ENCODE measurements at regions of chr5 and their contacts with region 1.

Region 1: GRCh38 chr5:96336351-96336985 is 96.6 kb downstream of the PCSK1 start:
- DNase-seq: peak; percentile 80
- H3K4me3 ChIP-seq: no peak overlapping the region
- H3K27ac ChIP-seq: no peak overlapping the region
- H3K27me3 ChIP-seq: no peaks in the 10 kb centered on the region
- CTCF ChIP-seq: peak; percentile 97

Region 2: DNA sequence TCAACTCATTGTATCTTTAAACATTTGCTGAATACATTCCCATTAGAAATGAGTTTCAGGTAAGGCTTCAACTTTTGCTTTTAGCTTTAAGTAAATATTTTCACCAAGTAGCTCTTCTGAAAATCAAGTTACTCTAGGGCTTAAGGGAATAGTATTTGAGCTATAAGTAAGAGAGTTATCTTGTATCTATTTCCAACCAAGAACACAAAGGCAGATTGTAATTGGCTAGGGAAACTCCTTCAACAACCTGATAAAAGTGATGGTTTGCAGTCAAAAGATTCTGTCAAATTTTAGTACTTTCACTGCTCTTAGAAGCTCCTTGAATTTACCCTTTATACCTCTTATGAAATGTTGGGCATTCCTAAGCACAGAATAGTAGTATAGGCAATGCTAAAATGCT is 387.8 kb before region 1 on chr5:
- CTCF ChIA-PET with region 1: interaction called, 11 read pairs
- POLR2A ChIA-PET with region 1: no interaction called
- DNase-seq: no peak
- H3K4me3 ChIP-seq: no peak overlapping the region
- H3K27ac ChIP-seq: no peak overlapping the region
- H3K27me3 ChIP-seq: no peaks in the 10 kb centered on the region
- CTCF ChIP-seq: no peak

Region 3: DNA sequence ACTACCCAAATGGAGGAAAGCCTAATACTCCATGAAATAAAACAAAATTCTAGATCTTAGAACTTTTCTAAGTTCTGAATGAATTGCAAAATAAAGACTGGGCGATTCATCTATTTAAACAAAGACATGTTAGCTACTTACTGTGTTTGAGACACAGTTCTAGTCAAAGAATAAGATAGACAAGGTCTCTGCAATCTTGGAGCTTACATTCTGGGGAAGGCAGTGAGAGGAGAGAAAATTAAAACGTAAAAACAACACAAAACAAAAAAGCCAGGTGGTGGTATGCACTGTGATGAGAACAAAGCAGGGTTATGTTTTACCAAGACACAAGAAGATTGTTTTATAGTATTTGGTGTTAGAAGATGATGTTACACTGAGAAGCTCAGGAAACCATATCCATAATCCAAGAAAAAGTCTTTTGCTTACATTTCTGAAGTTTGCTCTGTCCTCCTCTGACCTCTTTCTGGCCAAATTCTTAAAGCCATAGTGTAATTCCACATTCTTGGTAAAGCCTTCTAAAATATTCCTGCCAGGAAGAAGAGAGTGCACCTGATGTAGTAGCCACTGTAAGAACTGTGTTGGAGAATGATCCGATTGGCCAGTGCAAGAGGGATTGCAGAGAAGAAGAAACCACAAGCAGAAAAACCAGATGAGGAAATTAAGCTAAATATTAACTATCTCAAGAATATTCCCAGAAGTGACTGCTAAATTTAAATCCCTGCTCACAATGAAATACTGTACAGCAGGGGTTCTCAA is 121.8 kb before region 1 on chr5:
- CTCF ChIA-PET with region 1: interaction called, 12 read pairs
- POLR2A ChIA-PET with region 1: no interaction called
- DNase-seq: no peak
- H3K4me3 ChIP-seq: no peak overlapping the region
- H3K27ac ChIP-seq: no peak overlapping the region
- H3K27me3 ChIP-seq: no peaks in the 10 kb centered on the region
- CTCF ChIP-seq: no peak

Region 4: GRCh38 chr5:96259151-96259772 is 77.2 kb before region 1 on chr5:
- CTCF ChIA-PET with region 1: interaction called, 14 read pairs
- POLR2A ChIA-PET with region 1: no interaction called
- DNase-seq: no peak
- H3K4me3 ChIP-seq: no peak overlapping the region
- H3K27ac ChIP-seq: peak overlapping the region; percentile 90
- H3K27me3 ChIP-seq: no peaks in the 10 kb centered on the region
- CTCF ChIP-seq: no peak

Region 5: DNA sequence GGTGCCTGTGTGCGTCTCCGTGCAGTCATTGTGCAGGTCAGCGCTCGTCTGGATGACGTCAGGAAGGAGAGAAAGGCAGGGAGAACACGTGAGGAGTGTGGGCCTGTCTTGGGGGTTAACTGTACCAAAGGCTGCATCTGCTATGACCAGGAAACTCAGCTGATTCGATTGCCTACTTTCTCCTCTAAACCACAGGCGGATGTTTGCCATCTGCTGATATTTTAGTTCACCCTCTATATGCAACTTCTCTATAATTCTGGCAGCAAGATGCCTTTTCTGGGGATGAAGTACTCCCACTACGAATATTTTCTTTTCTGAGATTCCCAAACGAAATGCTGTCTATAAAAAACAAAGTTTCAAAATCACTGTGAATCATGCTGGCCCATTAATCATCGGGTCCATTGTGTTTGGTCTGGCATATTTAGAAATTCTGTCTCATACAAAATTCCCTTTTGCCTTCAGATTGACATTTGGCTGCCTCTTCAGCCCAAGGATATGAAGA is 71.9 kb after region 1 on chr5:
- CTCF ChIA-PET with region 1: no interaction called
- POLR2A ChIA-PET with region 1: no interaction called
- DNase-seq: no peak
- H3K4me3 ChIP-seq: no peak overlapping the region
- H3K27ac ChIP-seq: no peak overlapping the region
- H3K27me3 ChIP-seq: peaks cover 9% of the 10 kb centered on the region
- CTCF ChIP-seq: no peak

Region 6: GRCh38 chr5:96601811-96602244 is 265.4 kb after region 1 on chr5:
- CTCF ChIA-PET with region 1: interaction called, 10 read pairs
- POLR2A ChIA-PET with region 1: no interaction called
- DNase-seq: peak; percentile 44
- H3K4me3 ChIP-seq: no peak overlapping the region
- H3K27ac ChIP-seq: no peak overlapping the region
- H3K27me3 ChIP-seq: no peaks in the 10 kb centered on the region
- CTCF ChIP-seq: peak; percentile 85

Measured in AG04450 (cell line).